H1 (cell line): ENCODE measurements at regions of chr12 and their contacts with region 1.

Region 1: GRCh38 chr12:70365648-70366518 is at the start of gene KCNMB4:
- DNase-seq: peak; percentile 75 to 93
- H3K4me3 ChIP-seq: peak within 1 kb of the TSS; percentile 64 to 100 (median 92)
- H3K27ac ChIP-seq: no peak within 1 kb of the TSS
- H3K4me1 ChIP-seq: peaks cover 0 to 7% (median 2%) of the 10 kb centered on the region in 4 experiments; a peak in 4 of 7 replicates
- H3K27me3 ChIP-seq: peaks cover 0 to 7% (median 0%) of the 10 kb centered on the region in 4 experiments; a peak in 2 of 7 replicates
- CTCF ChIP-seq: no peak
- EP300 ChIP-seq: no peak
- POLR2A ChIP-seq: peak; percentile 46 to 47; a peak in 2 of 3 replicates
- RAD21 ChIP-seq: no peak
- total RNA-seq, gene KCNMB4: 12.7 and 16.0 TPM in 2 replicates

Region 2: DNA sequence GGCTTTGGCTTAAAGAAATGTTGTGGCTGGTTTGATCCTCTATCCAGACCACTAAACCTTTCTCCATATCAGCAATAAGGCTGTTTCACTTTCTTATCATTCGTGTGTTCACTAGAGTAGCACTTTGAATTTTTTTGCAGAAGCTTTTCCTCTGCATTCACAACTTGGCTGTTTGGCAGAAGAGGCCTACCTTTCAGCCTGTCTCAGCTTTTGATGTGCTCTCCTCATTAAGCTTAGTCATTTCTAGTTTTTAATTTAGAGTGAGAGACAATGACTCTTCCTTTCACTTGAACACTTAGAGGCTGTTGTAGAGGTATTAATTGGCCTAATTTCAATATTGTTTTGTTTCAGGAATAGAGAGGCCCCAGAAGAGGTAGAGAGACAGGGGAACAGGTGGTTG is 14.0 kb after region 1 on chr12:
- CTCF ChIA-PET with region 1: no interaction called
- POLR2A ChIA-PET with region 1: interaction called, 11 read pairs
- DNase-seq: no peak
- H3K4me3 ChIP-seq: no peak overlapping the region
- H3K27ac ChIP-seq: no peak overlapping the region
- H3K4me1 ChIP-seq: peaks cover 0 to 5% (median 0%) of the 10 kb centered on the region in 4 experiments; a peak in 1 of 7 replicates
- H3K27me3 ChIP-seq: no peaks in the 10 kb centered on the region
- CTCF ChIP-seq: no peak
- EP300 ChIP-seq: no peak
- POLR2A ChIP-seq: no peak
- RAD21 ChIP-seq: no peak

Region 3: GRCh38 chr12:70393787-70394499 is 28.1 kb after region 1 on chr12:
- CTCF ChIA-PET with region 1: no interaction called
- POLR2A ChIA-PET with region 1: no interaction called
- DNase-seq: no peak
- H3K4me3 ChIP-seq: no peak overlapping the region
- H3K27ac ChIP-seq: no peak overlapping the region
- H3K4me1 ChIP-seq: no peaks in the 10 kb centered on the region
- H3K27me3 ChIP-seq: no peaks in the 10 kb centered on the region
- CTCF ChIP-seq: no peak
- EP300 ChIP-seq: no peak
- POLR2A ChIP-seq: no peak
- RAD21 ChIP-seq: no peak

Region 4: GRCh38 chr12:70408004-70408790 is 42.3 kb after region 1 on chr12:
- CTCF ChIA-PET with region 1: no interaction called
- POLR2A ChIA-PET with region 1: no interaction called
- DNase-seq: no peak
- H3K4me3 ChIP-seq: no peak overlapping the region
- H3K27ac ChIP-seq: no peak overlapping the region
- H3K4me1 ChIP-seq: no peaks in the 10 kb centered on the region
- H3K27me3 ChIP-seq: no peaks in the 10 kb centered on the region
- CTCF ChIP-seq: no peak
- EP300 ChIP-seq: no peak
- POLR2A ChIP-seq: no peak
- RAD21 ChIP-seq: no peak

Region 5: DNA sequence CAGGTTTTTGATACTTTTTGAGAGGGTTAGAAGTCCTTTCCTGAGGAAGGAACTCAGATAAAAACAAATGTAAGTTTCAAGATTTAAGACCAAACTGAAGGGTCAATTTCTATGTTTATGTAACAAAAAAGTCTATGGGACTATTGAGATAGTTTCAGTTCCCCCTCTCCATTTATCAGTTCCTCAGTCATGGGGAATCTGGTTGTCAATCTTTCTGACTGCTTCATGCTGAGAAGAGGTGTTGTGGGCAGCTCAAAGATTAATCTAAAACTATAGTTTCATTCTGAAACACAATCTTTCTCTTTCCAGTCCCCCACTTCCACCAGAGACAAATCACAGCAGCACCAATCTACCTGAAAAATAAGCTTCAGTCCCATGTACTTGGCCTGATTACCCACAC is 93.9 kb after region 1 on chr12:
- CTCF ChIA-PET with region 1: no interaction called
- POLR2A ChIA-PET with region 1: no interaction called
- DNase-seq: no peak
- H3K4me3 ChIP-seq: no peak overlapping the region
- H3K27ac ChIP-seq: no peak overlapping the region
- H3K4me1 ChIP-seq: no peaks in the 10 kb centered on the region
- H3K27me3 ChIP-seq: no peaks in the 10 kb centered on the region
- CTCF ChIP-seq: no peak
- EP300 ChIP-seq: no peak
- POLR2A ChIP-seq: no peak
- RAD21 ChIP-seq: no peak